ENCODE measurements at regions of chr9 and their contacts with region 1.

Region 1: DNA sequence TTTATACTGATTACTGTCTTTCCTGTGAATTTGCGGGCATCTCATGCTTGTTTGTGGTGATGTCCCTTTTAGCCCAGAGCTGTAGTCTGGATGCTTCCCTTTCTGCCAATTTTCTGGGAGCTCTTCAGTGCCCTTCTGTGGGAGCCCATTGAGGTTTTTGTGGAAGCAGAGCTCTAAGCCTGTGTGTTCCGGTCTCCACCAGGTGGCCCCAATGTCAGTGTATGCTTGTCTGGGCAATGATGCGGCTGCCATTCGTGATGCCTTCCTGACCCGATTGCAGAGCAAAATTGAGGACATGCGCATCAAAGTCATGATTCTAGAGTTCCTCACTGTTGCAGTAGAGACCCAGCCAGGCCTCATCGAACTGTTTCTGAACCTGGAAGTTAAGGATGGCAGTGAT is 35.1 kb downstream of the SH3GLB2 start:
- ATAC-seq: peak in 6 of 8 experiments; percentile 19 to 63 (median 40)
- H3K4me3 ChIP-seq: no peak overlapping the region
- H3K27ac ChIP-seq: no peak overlapping the region
- H3K4me1 ChIP-seq: no peaks in the 10 kb centered on the region

Region 2: DNA sequence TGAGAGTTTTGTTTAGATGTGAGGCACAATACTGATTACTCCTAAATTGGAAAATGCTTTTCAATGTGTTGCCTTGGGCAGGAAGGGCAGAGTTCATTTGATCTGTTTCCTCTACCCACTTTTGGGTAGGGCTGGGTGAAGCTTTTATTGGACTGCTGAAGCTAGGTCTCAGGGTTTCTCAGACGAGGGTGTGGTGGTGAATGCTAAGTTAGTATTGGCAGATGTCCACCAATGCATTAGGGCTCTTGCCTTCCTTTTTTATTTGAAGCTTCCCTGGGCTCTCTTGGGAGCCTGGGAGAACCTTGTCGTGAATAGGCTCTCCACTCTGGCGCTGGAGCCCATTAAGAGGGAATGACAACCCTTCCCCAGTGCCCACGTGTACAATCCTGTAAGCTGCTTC is 417.5 kb before region 1 on chr9:
- in situ Hi-C with region 1: loop called in 1 of 9 experiments (anchors 25 kb)
- ATAC-seq: peak in 3 of 8 experiments; percentile 95 to 99 (median 96)
- H3K4me3 ChIP-seq: no peak overlapping the region
- H3K27ac ChIP-seq: no peak overlapping the region
- H3K4me1 ChIP-seq: no peaks in the 10 kb centered on the region

Region 3: GRCh38 chr9:128607642-128608350 is 385.2 kb before region 1 on chr9:
- in situ Hi-C with region 1: loop called in 1 of 9 experiments (anchors 25 kb)
- ATAC-seq: no peak
- H3K4me3 ChIP-seq: no peak overlapping the region
- H3K27ac ChIP-seq: no peak overlapping the region
- H3K4me1 ChIP-seq: no peaks in the 10 kb centered on the region

Measured in motor neuron (in vitro differentiated cells).